ENCODE measurements at regions of chr9 and their contacts with region 1.

Region 1: GRCh38 chr9:133658442-133659431 is 22.6 kb downstream of the DBH start:
- DNase-seq: no peak
- H3K4me3 ChIP-seq: no peak overlapping the region
- H3K4me3 Mint-ChIP-seq: peak overlapping the region in 5 of 8 donors; percentile 27 to 74 (median 69)
- H3K27ac ChIP-seq: no peak overlapping the region
- H3K27ac Mint-ChIP-seq: peak overlapping the region in 2 of 7 donors; percentile 15 to 77
- H3K4me1 ChIP-seq: peaks cover 34% of the 10 kb centered on the region
- H3K4me1 Mint-ChIP-seq: peaks cover 12 to 43% (median 24%) of the 10 kb centered on the region in 4 donors
- H3K27me3 ChIP-seq: peaks cover 6% of the 10 kb centered on the region
- H3K27me3 Mint-ChIP-seq: peaks cover 8 to 36% of the 10 kb centered on the region in 2 donors

Region 2: GRCh38 chr9:132144708-132145365 is 1513.9 kb before region 1 on chr9:
- CTCF ChIA-PET with region 1: no interaction called
- POLR2A ChIA-PET with region 1: no interaction called
- intact Hi-C with region 1: no loop called
- DNase-seq: no peak
- H3K4me3 ChIP-seq: no peak overlapping the region
- H3K4me3 Mint-ChIP-seq: no peak overlapping the region
- H3K27ac ChIP-seq: no peak overlapping the region
- H3K27ac Mint-ChIP-seq: no peak overlapping the region
- H3K4me1 ChIP-seq: peaks cover 10% of the 10 kb centered on the region
- H3K4me1 Mint-ChIP-seq: peaks cover 4 to 10% (median 9%) of the 10 kb centered on the region in 4 donors
- H3K27me3 ChIP-seq: no peaks in the 10 kb centered on the region
- H3K27me3 Mint-ChIP-seq: peaks cover 41 to 63% of the 10 kb centered on the region in 2 donors

Region 3: GRCh38 chr9:133715866-133716563 is 57.3 kb after region 1 on chr9:
- CTCF ChIA-PET with region 1: interaction called, 6 read pairs
- POLR2A ChIA-PET with region 1: no interaction called
- intact Hi-C with region 1: loop called (anchors 1 kb)
- DNase-seq: peak in 2 of 5 donors; percentile 25 to 42
- H3K4me3 ChIP-seq: no peak overlapping the region
- H3K4me3 Mint-ChIP-seq: no peak overlapping the region
- H3K27ac ChIP-seq: no peak overlapping the region
- H3K27ac Mint-ChIP-seq: peak overlapping the region in 6 of 7 donors; percentile 12 to 64 (median 44)
- H3K4me1 ChIP-seq: no peaks in the 10 kb centered on the region
- H3K4me1 Mint-ChIP-seq: peaks cover 0 to 18% (median 2%) of the 10 kb centered on the region in 4 donors
- H3K27me3 ChIP-seq: no peaks in the 10 kb centered on the region
- H3K27me3 Mint-ChIP-seq: peaks cover 0 to 10% of the 10 kb centered on the region in 2 donors

Region 4: GRCh38 chr9:133821601-133822429 is 163.1 kb after region 1 on chr9:
- CTCF ChIA-PET with region 1: no interaction called
- POLR2A ChIA-PET with region 1: no interaction called
- intact Hi-C with region 1: no loop called
- DNase-seq: no peak
- H3K4me3 ChIP-seq: no peak overlapping the region
- H3K4me3 Mint-ChIP-seq: no peak overlapping the region
- H3K27ac ChIP-seq: no peak overlapping the region
- H3K27ac Mint-ChIP-seq: no peak overlapping the region
- H3K4me1 ChIP-seq: no peaks in the 10 kb centered on the region
- H3K4me1 Mint-ChIP-seq: no peaks in the 10 kb centered on the region
- H3K27me3 ChIP-seq: no peaks in the 10 kb centered on the region
- H3K27me3 Mint-ChIP-seq: no peaks in the 10 kb centered on the region

Measured in CD4-positive, alpha-beta memory T cell (primary cell).